ENCODE measurements at regions of chr1 and their contacts with region 1.

Region 1: DNA sequence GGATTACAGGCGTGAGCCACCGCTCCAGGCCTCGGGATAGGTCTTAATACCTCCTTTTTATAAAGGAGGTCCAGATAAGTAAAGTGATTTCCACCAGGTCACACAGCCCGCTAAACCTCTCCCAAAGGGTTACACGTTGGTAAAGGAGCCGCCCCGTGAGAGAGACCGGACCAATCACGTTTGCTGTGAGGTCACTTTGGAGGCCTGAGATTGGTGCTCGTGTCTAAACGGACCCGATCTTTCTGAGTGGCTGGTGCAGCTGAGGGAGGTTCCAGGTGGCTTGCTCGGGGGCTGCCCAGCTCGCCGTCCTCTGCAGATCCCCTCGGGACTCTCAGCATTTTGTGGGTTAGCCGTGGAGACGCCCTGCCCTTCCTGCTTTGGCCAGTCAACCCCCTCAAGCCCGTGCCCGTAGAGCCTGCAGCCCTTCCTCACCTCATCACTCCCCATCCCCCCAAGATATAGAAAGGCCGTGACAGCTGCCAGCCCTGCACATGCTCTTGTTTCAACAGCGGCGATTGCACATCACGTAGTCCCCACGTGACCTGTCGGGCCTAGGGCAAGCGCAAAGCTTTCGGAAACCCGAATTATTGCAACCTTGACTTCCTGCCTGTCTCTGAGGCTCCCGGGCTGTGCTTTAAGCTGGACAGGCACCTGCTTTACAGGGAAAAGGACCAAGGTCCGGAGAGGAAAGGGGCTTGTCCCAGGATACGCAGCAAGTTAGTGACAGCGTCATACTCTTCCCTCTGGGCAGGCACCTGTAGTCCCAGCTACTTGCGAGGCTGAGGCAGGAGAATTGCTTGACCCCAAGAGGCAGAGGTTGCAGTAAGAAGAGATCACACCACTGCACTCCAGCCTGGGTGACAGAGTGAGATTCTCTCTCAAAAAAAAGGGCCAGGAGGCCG is 5.0 kb upstream of the COA7 start:
- DNase-seq: peak; percentile 81 to 88
- H3K4me3 ChIP-seq: peak overlapping the region; percentile 41
- H3K4me3 Mint-ChIP-seq: peak overlapping the region; percentile 80
- H3K27ac Mint-ChIP-seq: peak overlapping the region; percentile 86
- H3K4me1 ChIP-seq: peaks cover 30% of the 10 kb centered on the region
- H3K4me1 Mint-ChIP-seq: peaks cover 21% of the 10 kb centered on the region
- H3K27me3 ChIP-seq: no peaks in the 10 kb centered on the region
- H3K27me3 Mint-ChIP-seq: no peaks in the 10 kb centered on the region
- CTCF ChIP-seq: no peak

Region 2: GRCh38 chr1:52726265-52727113 is 23.4 kb after region 1 on chr1 and contains the start of gene ZYG11B:
- CTCF ChIA-PET with region 1: no interaction called
- POLR2A ChIA-PET with region 1: no interaction called
- intact Hi-C with region 1: loop called (anchors 2 kb)
- DNase-seq: peak; percentile 81 to 91
- H3K4me3 ChIP-seq: peak within 1 kb of the TSS; percentile 85
- H3K4me3 Mint-ChIP-seq: peak within 1 kb of the TSS; percentile 96
- H3K27ac Mint-ChIP-seq: peak within 1 kb of the TSS; percentile 87
- H3K4me1 ChIP-seq: no peaks in the 10 kb centered on the region; the same call in 1 of the 2 replicates
- H3K4me1 Mint-ChIP-seq: peaks cover 12% of the 10 kb centered on the region
- H3K27me3 ChIP-seq: no peaks in the 10 kb centered on the region
- H3K27me3 Mint-ChIP-seq: no peaks in the 10 kb centered on the region
- CTCF ChIP-seq: no peak
- total RNA-seq, gene ZYG11B: 15.8 and 17.1 TPM in 2 replicates

Region 3: GRCh38 chr1:52748119-52748518 is 45.0 kb after region 1 on chr1:
- CTCF ChIA-PET with region 1: no interaction called
- POLR2A ChIA-PET with region 1: no interaction called
- intact Hi-C with region 1: loop called (anchors 2 kb)
- DNase-seq: no peak
- H3K4me3 ChIP-seq: no peak overlapping the region
- H3K4me3 Mint-ChIP-seq: no peak overlapping the region
- H3K27ac Mint-ChIP-seq: no peak overlapping the region
- H3K4me1 ChIP-seq: peaks cover 15% of the 10 kb centered on the region; the same call in 1 of the 2 replicates
- H3K4me1 Mint-ChIP-seq: peaks cover 13% of the 10 kb centered on the region
- H3K27me3 ChIP-seq: no peaks in the 10 kb centered on the region
- H3K27me3 Mint-ChIP-seq: no peaks in the 10 kb centered on the region
- CTCF ChIP-seq: no peak

Region 4: DNA sequence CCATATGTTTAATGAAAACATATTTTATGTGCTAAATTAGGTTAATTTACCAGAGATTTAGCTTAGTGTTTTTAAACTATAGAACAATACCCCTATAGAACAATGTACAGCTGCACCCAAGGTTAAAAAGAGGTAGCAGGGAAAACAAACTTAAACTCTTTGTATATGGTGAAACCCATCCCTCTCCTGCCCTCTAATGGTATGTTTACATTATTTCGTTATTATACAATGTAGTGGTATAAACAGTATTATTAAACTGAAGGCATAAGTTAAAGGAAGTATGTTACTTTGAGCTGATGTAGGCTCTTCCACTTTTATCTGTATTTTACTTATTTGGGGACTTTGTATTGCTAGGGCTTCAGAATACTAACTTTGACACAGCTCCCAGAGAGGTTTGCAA is 122.7 kb after region 1 on chr1:
- CTCF ChIA-PET with region 1: no interaction called
- POLR2A ChIA-PET with region 1: no interaction called
- intact Hi-C with region 1: loop called (anchors 5 kb)
- DNase-seq: no peak
- H3K4me3 ChIP-seq: no peak overlapping the region
- H3K4me3 Mint-ChIP-seq: no peak overlapping the region
- H3K27ac Mint-ChIP-seq: no peak overlapping the region
- H3K4me1 ChIP-seq: no peaks in the 10 kb centered on the region
- H3K4me1 Mint-ChIP-seq: no peaks in the 10 kb centered on the region
- H3K27me3 ChIP-seq: no peaks in the 10 kb centered on the region
- H3K27me3 Mint-ChIP-seq: no peaks in the 10 kb centered on the region
- CTCF ChIP-seq: peak in 1 of 2 experiments; percentile 22

Region 5: DNA sequence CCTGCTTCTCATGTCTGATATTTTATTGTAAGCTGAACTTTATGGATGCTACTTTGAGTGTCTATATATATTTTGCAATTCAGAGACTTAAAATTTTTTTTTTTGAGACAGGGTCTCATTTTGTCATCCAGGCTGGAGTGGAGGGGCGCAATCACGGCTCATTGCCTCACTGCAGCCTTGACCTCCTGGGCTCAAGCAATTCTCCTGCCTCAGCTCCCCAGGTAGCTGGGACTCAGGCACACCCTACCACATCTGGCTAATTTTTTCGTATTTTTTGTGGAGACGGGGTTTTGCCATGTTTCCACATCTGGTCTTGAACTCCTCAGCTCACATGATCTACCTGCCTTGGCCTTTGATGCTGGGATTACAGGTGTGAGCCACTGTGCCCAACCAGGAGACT is 147.8 kb after region 1 on chr1:
- CTCF ChIA-PET with region 1: no interaction called
- POLR2A ChIA-PET with region 1: no interaction called
- intact Hi-C with region 1: no loop called
- DNase-seq: no peak
- H3K4me3 ChIP-seq: no peak overlapping the region
- H3K4me3 Mint-ChIP-seq: no peak overlapping the region
- H3K27ac Mint-ChIP-seq: no peak overlapping the region
- H3K4me1 ChIP-seq: no peaks in the 10 kb centered on the region
- H3K4me1 Mint-ChIP-seq: no peaks in the 10 kb centered on the region
- H3K27me3 ChIP-seq: no peaks in the 10 kb centered on the region
- H3K27me3 Mint-ChIP-seq: no peaks in the 10 kb centered on the region
- CTCF ChIP-seq: no peak

Region 6: GRCh38 chr1:52920791-52921291 is 217.7 kb after region 1 on chr1:
- CTCF ChIA-PET with region 1: no interaction called
- POLR2A ChIA-PET with region 1: no interaction called
- intact Hi-C with region 1: loop called (anchors 2 kb)
- DNase-seq: no peak
- H3K4me3 ChIP-seq: peak overlapping the region; percentile 50
- H3K4me3 Mint-ChIP-seq: peak overlapping the region; percentile 70
- H3K27ac Mint-ChIP-seq: no peak overlapping the region
- H3K4me1 ChIP-seq: no peaks in the 10 kb centered on the region
- H3K4me1 Mint-ChIP-seq: no peaks in the 10 kb centered on the region
- H3K27me3 ChIP-seq: no peaks in the 10 kb centered on the region
- H3K27me3 Mint-ChIP-seq: no peaks in the 10 kb centered on the region
- CTCF ChIP-seq: no peak